Gastrocnemius medialis (tissue), 4 donors: ENCODE measurements at regions of chr1 and their contacts with region 1.

Region 1: DNA sequence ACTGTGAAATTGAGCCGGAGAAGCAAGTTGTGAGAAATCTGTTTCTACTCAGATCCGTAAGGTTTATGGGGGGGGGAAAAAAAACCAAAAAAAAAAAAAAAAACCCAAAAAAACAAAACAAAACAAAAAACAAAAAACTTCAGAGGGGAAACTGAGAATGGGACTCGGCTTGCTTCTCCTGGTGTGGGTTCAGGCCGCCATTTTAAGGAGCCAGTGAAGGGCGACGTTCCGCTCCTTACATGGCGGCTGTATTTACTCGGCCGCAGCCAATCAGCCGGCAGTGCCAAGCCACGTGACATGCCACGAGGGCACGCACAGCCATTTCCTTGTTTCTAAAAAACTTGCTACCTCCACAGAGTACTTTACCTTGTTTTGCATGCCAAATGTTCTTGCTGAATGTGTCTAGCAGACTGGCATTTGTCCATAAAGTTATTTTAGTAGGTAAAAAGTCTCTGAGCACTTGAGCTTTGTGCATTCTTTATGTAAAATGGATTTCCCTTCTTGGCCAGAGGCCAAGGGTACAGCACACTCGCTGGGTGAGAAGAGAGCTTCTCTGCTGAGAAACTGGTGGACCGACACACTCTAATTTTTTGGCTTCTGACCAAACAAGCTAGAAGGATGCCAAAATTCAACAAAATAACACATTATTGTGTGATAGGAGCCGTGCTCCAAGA is 101.8 kb downstream of the NFIA start:
- DNase-seq: peak; percentile 93 to 97
- ATAC-seq: peak; percentile 80 to 81
- H3K4me3 ChIP-seq: peak overlapping the region; percentile 47 to 59 (median 58)
- H3K27ac ChIP-seq: peak overlapping the region; percentile 90 to 94 (median 92)
- H3K4me1 ChIP-seq: peaks cover 73 to 84% of the 10 kb centered on the region in 2 donors
- H3K27me3 ChIP-seq: no peaks in the 10 kb centered on the region
- CTCF ChIP-seq: no peak
- POLR2A ChIP-seq: peak in 1 of 2 donors; percentile 12

Region 2: DNA sequence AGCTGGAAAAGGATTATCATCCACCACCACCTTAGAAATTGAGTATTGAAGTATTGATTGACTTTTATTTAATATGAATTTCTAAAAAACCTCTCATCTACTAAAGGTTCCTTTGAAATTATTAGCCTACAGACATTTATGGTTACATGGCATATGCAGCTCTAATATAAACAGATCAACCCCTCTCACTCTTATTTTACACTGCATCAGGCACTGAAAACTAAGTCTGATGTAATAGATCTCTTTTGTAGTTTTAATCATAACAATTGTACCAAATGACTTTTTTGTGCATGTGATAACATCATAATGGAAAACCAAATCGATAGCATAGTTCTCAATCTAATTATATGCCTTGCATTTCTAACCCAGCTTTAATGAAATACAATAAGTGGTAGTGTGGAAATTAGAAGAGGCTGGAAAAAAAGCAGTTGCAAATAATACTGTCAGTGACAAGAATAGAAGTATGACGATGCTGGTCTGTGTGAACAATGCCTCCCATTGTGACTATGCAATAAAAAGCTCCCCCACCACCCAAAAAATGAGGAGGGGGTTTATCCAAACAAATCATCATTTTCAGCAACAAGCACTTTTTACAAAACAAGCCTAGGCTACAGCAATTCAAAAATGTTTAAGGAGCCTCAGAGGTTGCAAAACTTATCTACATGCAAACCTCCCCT is 528.4 kb before region 1 on chr1:
- in situ Hi-C with region 1: no loop called
- intact Hi-C with region 1: no loop called
- DNase-seq: no peak
- ATAC-seq: no peak
- H3K4me3 ChIP-seq: no peak overlapping the region
- H3K27ac ChIP-seq: no peak overlapping the region
- H3K4me1 ChIP-seq: no peaks in the 10 kb centered on the region
- H3K27me3 ChIP-seq: no peaks in the 10 kb centered on the region
- CTCF ChIP-seq: no peak
- POLR2A ChIP-seq: no peak

Region 3: GRCh38 chr1:60911966-60912697 is 272.0 kb before region 1 on chr1:
- in situ Hi-C with region 1: no loop called
- intact Hi-C with region 1: no loop called
- DNase-seq: peak; percentile 77
- ATAC-seq: peak; percentile 94 to 96
- H3K4me3 ChIP-seq: no peak overlapping the region
- H3K27ac ChIP-seq: peak overlapping the region; percentile 1 to 47 (median 36)
- H3K4me1 ChIP-seq: peaks cover 12 to 15% of the 10 kb centered on the region in 2 donors
- H3K27me3 ChIP-seq: no peaks in the 10 kb centered on the region
- CTCF ChIP-seq: no peak
- POLR2A ChIP-seq: no peak

Region 4: DNA sequence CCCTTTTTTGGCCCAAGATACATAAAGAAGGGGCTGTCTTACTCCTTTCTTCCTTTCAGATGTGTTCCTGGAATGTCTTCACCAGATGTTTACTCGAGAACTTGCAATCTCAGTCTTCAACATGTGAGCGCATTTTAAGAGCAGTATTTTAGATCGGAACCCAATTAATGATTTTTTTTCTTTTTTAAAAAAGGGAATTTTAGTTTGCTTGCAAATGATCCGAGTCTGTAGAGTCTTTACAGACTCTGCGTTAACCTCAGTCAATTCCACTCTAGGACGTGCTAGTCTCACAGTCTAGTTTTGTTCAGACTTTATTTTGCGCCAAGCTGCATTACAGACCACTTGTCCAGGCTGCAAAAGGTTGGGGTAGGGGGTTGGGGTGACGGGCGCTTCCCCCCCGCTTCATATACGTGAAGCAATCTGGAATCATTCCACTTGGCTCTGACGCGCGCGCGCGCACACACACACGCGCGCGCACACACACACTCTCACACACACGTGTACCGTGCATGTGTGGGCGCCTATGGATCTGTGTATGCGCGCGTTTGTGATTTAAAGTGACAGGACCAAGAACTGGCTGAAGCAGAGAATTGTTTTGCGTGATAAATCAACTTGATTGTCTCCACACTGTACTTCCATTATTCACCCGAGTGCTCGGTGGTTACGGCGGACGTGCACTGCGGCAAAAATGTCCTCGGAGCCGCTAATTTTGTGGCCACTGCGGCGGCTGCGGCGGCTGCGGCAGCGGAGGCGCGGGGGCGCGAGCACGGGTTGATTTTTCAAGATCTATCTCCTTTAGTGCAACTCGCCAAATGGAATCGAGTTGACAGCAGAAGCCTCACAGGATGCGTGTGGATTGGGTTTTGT is 127.4 kb before region 1 on chr1:
- in situ Hi-C with region 1: no loop called
- intact Hi-C with region 1: loop called (anchors 2 kb)
- DNase-seq: peak in 1 of 2 donors; percentile 62
- ATAC-seq: peak; percentile 16 to 24
- H3K4me3 ChIP-seq: peak overlapping the region; percentile 68 to 93 (median 84)
- H3K27ac ChIP-seq: peak overlapping the region; percentile 92 to 100 (median 96)
- H3K4me1 ChIP-seq: peaks cover 29 to 38% of the 10 kb centered on the region in 2 donors
- H3K27me3 ChIP-seq: no peaks in the 10 kb centered on the region
- CTCF ChIP-seq: no peak
- POLR2A ChIP-seq: no peak

Region 5: DNA sequence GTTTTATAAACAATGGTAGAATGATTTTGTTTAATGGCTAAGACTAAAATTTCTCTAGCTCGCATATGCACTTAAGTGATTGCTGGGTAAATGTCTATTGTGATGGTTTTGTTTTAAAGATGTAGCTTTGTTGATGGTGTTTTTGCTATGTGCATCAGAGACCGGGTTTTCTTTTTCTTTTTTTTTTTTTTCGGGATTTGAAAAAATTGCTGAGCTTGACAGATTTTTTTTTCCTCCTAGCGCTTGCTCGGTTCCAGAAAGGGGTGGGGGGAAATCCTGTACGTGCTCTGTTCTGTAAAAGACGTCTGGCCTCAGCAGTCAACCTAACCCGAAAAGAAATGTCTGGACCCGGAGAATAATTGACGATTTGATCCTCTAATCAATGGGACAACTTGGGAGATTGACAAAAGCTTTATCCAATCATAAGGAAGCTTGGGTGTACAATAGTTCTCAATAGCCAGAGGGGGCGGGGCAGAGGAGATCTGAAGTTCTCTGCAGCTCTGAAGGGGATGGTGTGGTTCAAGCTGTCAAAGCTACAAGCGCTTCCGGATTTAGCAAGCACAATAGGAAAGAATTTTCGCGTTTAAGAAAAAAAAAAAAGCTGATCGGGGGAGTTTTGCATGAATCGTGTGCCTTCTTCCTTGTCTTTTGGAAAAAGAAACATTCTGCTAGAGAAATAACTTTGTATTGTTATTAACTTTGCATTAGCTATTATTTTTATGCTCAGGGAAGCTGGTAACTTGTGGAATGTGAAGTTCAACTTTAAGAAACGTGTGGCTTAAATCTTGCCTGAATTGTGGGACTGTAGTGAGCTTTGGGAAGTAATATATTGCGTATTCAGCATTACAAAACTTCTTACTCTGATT is 106.3 kb before region 1 on chr1:
- in situ Hi-C with region 1: loop called in 1 of 4 experiments (anchors 10 kb)
- intact Hi-C with region 1: loop called (anchors 2 kb)
- DNase-seq: peak; percentile 84 to 88
- ATAC-seq: peak; percentile 47 to 55
- H3K4me3 ChIP-seq: peak overlapping the region; percentile 58 to 96 (median 73)
- H3K27ac ChIP-seq: peak overlapping the region; percentile 82 to 96 (median 92)
- H3K4me1 ChIP-seq: peaks cover 32 to 39% of the 10 kb centered on the region in 2 donors
- H3K27me3 ChIP-seq: no peaks in the 10 kb centered on the region
- CTCF ChIP-seq: no peak
- POLR2A ChIP-seq: peak in 1 of 2 donors; percentile 17

Region 6: DNA sequence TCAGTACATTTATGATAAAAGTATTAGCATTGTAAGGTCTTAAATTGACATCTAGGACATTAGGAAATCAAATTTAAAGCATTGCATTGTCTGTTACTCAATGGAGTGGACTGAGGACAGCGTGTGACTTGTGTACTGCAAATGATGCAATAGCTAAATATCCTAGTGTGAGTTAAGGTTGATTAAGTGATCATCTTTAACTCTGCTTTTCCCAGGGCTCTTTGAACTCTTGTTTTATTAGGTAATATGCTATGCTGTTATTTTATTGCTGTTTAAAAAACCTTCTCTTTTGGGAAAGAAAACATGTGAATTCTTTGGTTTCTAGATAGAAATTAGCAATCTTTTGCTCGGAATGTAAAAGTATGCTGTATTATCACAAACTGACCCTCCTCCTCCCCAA is 63.2 kb before region 1 on chr1:
- in situ Hi-C with region 1: no loop called
- intact Hi-C with region 1: loop called (anchors 2 kb)
- DNase-seq: peak; percentile 32 to 45
- ATAC-seq: peak; percentile 79 to 81
- H3K4me3 ChIP-seq: peak overlapping the region; percentile 35 to 46 (median 45)
- H3K27ac ChIP-seq: peak overlapping the region; percentile 81 to 93 (median 88)
- H3K4me1 ChIP-seq: peaks cover 86 to 91% of the 10 kb centered on the region in 2 donors
- H3K27me3 ChIP-seq: no peaks in the 10 kb centered on the region
- CTCF ChIP-seq: peak in 1 of 5 experiments; percentile 9
- POLR2A ChIP-seq: peak in 1 of 2 donors; percentile 9

Region 7: GRCh38 chr1:61141288-61142042 is 42.7 kb before region 1 on chr1:
- in situ Hi-C with region 1: no loop called
- intact Hi-C with region 1: loop called (anchors 2 kb)
- DNase-seq: peak; percentile 62 to 73
- ATAC-seq: peak; percentile 76 to 84
- H3K4me3 ChIP-seq: peak overlapping the region in 3 of 4 donors; percentile 1 to 32 (median 12)
- H3K27ac ChIP-seq: peak overlapping the region; percentile 74 to 81 (median 78)
- H3K4me1 ChIP-seq: peaks cover 49 to 55% of the 10 kb centered on the region in 2 donors
- H3K27me3 ChIP-seq: no peaks in the 10 kb centered on the region
- CTCF ChIP-seq: no peak
- POLR2A ChIP-seq: no peak

Region 8: GRCh38 chr1:61244114-61244513 is 59.9 kb after region 1 on chr1:
- in situ Hi-C with region 1: no loop called
- intact Hi-C with region 1: loop called (anchors 5 kb)
- DNase-seq: peak in 1 of 2 donors; percentile 31
- ATAC-seq: peak; percentile 23 to 58
- H3K4me3 ChIP-seq: no peak overlapping the region
- H3K27ac ChIP-seq: peak overlapping the region; percentile 83 to 89 (median 86)
- H3K4me1 ChIP-seq: peaks cover 69% of the 10 kb centered on the region in 2 donors
- H3K27me3 ChIP-seq: no peaks in the 10 kb centered on the region
- CTCF ChIP-seq: no peak
- POLR2A ChIP-seq: no peak

Region 9: GRCh38 chr1:61337981-61338848 is 154.0 kb after region 1 on chr1:
- in situ Hi-C with region 1: no loop called
- intact Hi-C with region 1: loop called (anchors 5 kb)
- DNase-seq: peak; percentile 74 to 81
- ATAC-seq: peak; percentile 87 to 92
- H3K4me3 ChIP-seq: peak overlapping the region; percentile 32 to 41 (median 38)
- H3K27ac ChIP-seq: peak overlapping the region; percentile 75 to 83 (median 78)
- H3K4me1 ChIP-seq: peaks cover 33 to 35% of the 10 kb centered on the region in 2 donors
- H3K27me3 ChIP-seq: no peaks in the 10 kb centered on the region
- CTCF ChIP-seq: peak; percentile 70 to 86 (median 78)
- POLR2A ChIP-seq: no peak